Breast epithelium (tissue), 4 donors: ENCODE measurements at regions of chr9 and their contacts with region 1.

Region 1: DNA sequence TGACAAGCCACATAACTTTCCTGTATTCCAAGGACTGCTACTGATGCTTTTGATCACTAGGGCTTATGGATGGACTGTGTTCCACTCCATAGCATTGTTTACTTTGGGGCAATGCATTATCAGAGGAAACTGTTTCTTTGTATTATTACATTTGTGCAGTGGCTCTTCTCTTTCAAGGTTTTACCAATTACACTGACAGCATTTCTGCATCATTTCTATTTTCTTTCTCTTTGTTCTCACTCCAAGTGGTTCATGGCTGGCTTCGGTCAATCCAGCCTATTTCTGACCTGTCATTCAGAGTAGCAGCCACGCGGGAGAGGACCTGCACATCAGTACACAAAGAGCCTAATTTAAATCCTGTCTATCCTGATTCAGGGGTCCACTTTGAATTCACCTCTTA is 711.0 kb downstream of the TLE4 start:
- DNase-seq: no peak
- H3K4me3 ChIP-seq: no peak overlapping the region
- H3K27ac ChIP-seq: no peak overlapping the region
- H3K4me1 ChIP-seq: no peaks in the 10 kb centered on the region
- H3K27me3 ChIP-seq: no peaks in the 10 kb centered on the region
- CTCF ChIP-seq: no peak
- POLR2A ChIP-seq: no peak

Region 2: DNA sequence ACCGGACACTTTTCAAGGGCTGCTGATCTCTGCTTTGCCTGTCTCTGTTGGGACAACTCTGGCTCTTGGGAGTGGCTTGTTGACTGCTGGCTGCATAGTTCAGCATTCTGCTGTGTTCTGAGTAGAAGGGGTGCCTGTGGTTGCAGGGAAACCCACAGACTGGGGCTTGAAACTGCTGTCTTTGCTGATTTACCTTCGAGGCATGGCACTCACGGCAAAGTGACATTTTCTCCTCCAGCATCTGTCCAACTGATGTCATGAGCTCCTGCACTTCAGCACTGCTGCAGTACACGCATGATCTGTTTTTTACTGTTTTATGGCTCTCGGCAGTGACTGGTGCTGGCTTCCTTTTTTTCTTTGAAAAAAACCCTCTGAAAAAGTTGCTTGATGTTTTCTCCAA is 1775.0 kb after region 1 on chr9:
- intact Hi-C with region 1: loop called (anchors 10 kb)
- DNase-seq: no peak
- H3K4me3 ChIP-seq: no peak overlapping the region
- H3K27ac ChIP-seq: no peak overlapping the region
- H3K4me1 ChIP-seq: no peaks in the 10 kb centered on the region
- H3K27me3 ChIP-seq: no peaks in the 10 kb centered on the region
- CTCF ChIP-seq: no peak
- POLR2A ChIP-seq: no peak